Posterior cingulate gyrus (tissue), 11 donors: ENCODE measurements at regions of chr5 and their contacts with region 1.

Region 1: GRCh38 chr5:11700391-11700790 is 203.9 kb downstream of the CTNND2 start:
- DNase-seq: no peak

Region 2: GRCh38 chr5:11757661-11758060 is 57.3 kb after region 1 on chr5:
- intact Hi-C with region 1: loop called (anchors 2 kb)
- DNase-seq: no peak